Tibial artery (tissue), 4 donors: ENCODE measurements at regions of chr14 and their contacts with region 1.

Region 1: DNA sequence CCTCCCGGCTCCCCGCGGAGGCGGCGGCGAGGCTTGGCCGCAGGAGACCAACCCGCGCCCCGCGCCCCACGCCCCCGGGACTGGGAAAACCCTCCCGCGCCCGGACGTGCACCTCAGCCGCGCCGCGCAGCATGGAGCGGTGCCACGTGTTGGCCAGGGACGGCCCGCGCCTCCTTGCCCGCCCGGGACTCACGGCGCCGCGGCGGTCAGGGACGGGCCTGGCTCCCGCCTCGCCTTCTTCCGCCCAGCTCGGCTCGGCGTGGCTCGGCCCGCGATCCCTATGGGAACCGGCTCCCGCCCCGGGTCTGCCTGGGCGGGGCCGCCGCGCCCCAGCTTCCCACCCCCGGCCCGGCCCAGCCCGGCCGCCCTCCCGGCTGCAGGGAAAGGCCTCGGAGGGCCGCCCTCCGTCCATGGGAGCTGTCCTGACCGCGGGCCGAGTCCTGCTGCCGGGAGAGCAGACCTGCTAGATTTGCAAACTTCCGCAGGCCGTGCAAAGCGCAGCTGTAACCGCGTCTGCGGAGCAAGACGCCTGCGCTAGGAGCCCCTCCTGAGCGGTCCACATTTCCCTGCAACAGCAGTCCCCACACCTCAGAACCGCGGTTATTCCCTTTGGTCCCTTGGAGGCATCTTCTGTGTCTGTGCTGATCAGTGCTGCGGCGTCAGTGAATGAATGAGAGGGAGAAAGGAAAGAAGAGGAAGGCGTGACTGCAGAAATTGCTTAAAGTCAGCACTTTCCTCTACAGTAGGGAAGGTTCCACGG is at the start of gene CDKL1:
- DNase-seq: peak; percentile 50 to 78
- H3K4me3 ChIP-seq: peak within 1 kb of the TSS; percentile 65 to 71
- H3K27ac ChIP-seq: peak within 1 kb of the TSS; percentile 75 to 89
- H3K4me1 ChIP-seq: peaks cover 0 to 38% (median 25%) of the 10 kb centered on the region in 4 donors
- H3K27me3 ChIP-seq: no peaks in the 10 kb centered on the region
- CTCF ChIP-seq: no peak

Region 2: DNA sequence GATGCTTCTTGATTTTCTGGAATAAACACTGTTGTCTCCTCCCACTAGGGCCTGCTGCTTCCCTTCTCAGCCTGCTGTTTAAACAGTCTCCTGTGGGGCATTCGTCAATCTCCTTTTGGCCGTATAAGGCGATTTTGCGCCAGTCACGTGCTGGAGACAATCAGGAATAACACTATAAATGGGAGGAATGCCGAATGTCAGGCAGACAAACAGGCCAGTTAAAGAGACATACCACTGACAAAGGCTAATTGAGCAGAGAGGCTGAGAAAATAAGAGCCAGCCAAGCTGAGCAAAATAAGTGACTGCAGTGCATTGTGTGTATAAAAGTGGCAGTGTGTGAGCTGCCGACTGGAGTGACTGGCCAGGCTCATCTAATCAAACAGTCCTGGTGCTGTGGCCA is 61.4 kb before region 1 on chr14:
- intact Hi-C with region 1: loop called (anchors 10 kb)
- DNase-seq: peak; percentile 72 to 79
- H3K4me3 ChIP-seq: no peak overlapping the region
- H3K27ac ChIP-seq: peak overlapping the region; percentile 18 to 21
- H3K4me1 ChIP-seq: peaks cover 0 to 17% (median 8%) of the 10 kb centered on the region in 4 donors
- H3K27me3 ChIP-seq: no peaks in the 10 kb centered on the region
- CTCF ChIP-seq: no peak